Activated CD4-positive, alpha-beta T cell treated with anti-CD3 and anti-CD28 coated beads for 36 hours (primary cell): ENCODE measurements at regions of chr1 and their contacts with region 1.

Region 1: DNA sequence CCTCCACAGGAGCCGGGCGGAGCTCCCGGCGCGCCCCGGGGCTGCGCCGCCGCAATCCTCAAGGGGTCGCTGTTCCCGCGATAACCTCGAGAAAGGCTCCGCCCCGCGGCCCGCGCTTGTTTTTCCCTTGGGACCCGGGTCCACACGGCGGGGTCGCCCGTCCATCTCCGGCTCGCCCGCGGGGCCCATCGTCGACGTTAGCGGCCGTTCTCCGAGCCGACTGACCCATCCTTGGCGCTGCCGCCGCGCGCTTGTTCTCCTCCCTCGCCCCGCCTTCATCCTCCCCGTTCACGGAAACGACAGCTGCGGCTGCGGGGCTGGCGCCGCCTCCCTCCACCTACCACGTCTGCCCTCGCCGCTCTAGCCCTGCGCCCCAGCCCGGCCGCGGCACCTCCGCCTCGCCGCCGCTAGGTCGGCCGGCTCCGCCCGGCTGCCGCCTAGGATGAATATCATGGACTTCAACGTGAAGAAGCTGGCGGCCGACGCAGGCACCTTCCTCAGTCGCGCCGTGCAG is at the start of gene SH3GLB1:
- DNase-seq: peak; percentile 93
- ATAC-seq: peak; percentile 90
- H3K4me3 Mint-ChIP-seq: peak within 1 kb of the TSS; percentile 98
- H3K27ac Mint-ChIP-seq: peak within 1 kb of the TSS; percentile 98
- H3K4me1 Mint-ChIP-seq: peaks cover 44% of the 10 kb centered on the region
- H3K27me3 Mint-ChIP-seq: no peaks in the 10 kb centered on the region
- total RNA-seq, gene SH3GLB1: 58.0 to 64.5 TPM

Region 2: GRCh38 chr1:85707990-85708828 is 996.3 kb before region 1 on chr1 and contains the start of gene ZNHIT6:
- CTCF ChIA-PET with region 1: no interaction called
- POLR2A ChIA-PET with region 1: no interaction called
- intact Hi-C with region 1: loop called in 1 of 2 experiments (anchors 10 kb)
- DNase-seq: peak; percentile 93
- ATAC-seq: peak; percentile 96
- H3K4me3 Mint-ChIP-seq: no peak within 1 kb of the TSS
- H3K27ac Mint-ChIP-seq: no peak within 1 kb of the TSS
- H3K4me1 Mint-ChIP-seq: peaks cover 26% of the 10 kb centered on the region
- H3K27me3 Mint-ChIP-seq: no peaks in the 10 kb centered on the region
- total RNA-seq, gene ZNHIT6: 20.7 to 23.8 TPM

Region 3: GRCh38 chr1:86557739-86558138 is 146.8 kb before region 1 on chr1:
- CTCF ChIA-PET with region 1: no interaction called
- POLR2A ChIA-PET with region 1: no interaction called
- intact Hi-C with region 1: no loop called
- DNase-seq: no peak
- ATAC-seq: no peak
- H3K4me3 Mint-ChIP-seq: no peak overlapping the region
- H3K27ac Mint-ChIP-seq: no peak overlapping the region
- H3K4me1 Mint-ChIP-seq: no peaks in the 10 kb centered on the region
- H3K27me3 Mint-ChIP-seq: peaks cover 23% of the 10 kb centered on the region

Region 4: DNA sequence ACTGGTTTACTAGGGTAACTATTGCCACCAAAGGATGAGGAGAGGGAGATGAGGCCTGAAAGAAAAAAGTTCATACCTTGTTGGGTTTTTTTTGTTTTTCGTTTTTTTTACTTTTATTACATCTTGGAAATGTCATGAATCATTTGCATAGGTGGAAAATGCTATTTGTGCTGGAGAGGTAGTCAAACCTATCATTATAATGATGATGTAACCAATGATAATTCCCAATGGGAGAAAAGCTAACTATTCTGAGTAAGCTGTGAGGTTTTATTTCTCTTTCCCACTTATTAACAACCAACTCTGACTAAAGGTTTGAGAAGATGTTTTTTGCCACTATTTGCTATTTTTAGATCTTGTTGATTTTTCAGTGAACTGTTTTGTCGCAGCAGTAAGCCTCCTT is 28.8 kb after region 1 on chr1:
- CTCF ChIA-PET with region 1: interaction called, 12 read pairs
- POLR2A ChIA-PET with region 1: no interaction called
- intact Hi-C with region 1: no loop called
- DNase-seq: no peak
- ATAC-seq: no peak
- H3K4me3 Mint-ChIP-seq: no peak overlapping the region
- H3K27ac Mint-ChIP-seq: no peak overlapping the region
- H3K4me1 Mint-ChIP-seq: peaks cover 2% of the 10 kb centered on the region
- H3K27me3 Mint-ChIP-seq: no peaks in the 10 kb centered on the region

Region 5: GRCh38 chr1:86774305-86775295 is 70.1 kb after region 1 on chr1:
- CTCF ChIA-PET with region 1: interaction called, 6 read pairs
- POLR2A ChIA-PET with region 1: no interaction called
- intact Hi-C with region 1: loop called (anchors 1 to 2 kb)
- DNase-seq: peak; percentile 84
- ATAC-seq: peak; percentile 100
- H3K4me3 Mint-ChIP-seq: peak overlapping the region; percentile 38
- H3K27ac Mint-ChIP-seq: peak overlapping the region; percentile 86
- H3K4me1 Mint-ChIP-seq: peaks cover 26% of the 10 kb centered on the region
- H3K27me3 Mint-ChIP-seq: no peaks in the 10 kb centered on the region

Region 6: GRCh38 chr1:87084244-87084836 is 379.8 kb after region 1 on chr1:
- CTCF ChIA-PET with region 1: interaction called, 4 read pairs
- POLR2A ChIA-PET with region 1: no interaction called
- intact Hi-C with region 1: loop called in 1 of 2 experiments (anchors 1 kb)
- DNase-seq: no peak
- ATAC-seq: peak; percentile 30
- H3K4me3 Mint-ChIP-seq: no peak overlapping the region
- H3K27ac Mint-ChIP-seq: no peak overlapping the region
- H3K4me1 Mint-ChIP-seq: peaks cover 13% of the 10 kb centered on the region
- H3K27me3 Mint-ChIP-seq: no peaks in the 10 kb centered on the region